ENCODE measurements at regions of chr1 and their contacts with region 1.

Region 1: GRCh38 chr1:167066333-167067122 is 23.6 kb downstream of the GPA33 start:
- DNase-seq: peak; percentile 66 to 82
- ATAC-seq: peak; percentile 85 to 94 (median 88)
- H3K4me3 ChIP-seq: peak overlapping the region in 7 of 10 donors; percentile 2 to 36 (median 24)
- H3K27ac ChIP-seq: no peak overlapping the region
- H3K4me1 ChIP-seq: peaks cover 0 to 12% (median 6%) of the 10 kb centered on the region in 9 donors
- H3K27me3 ChIP-seq: peaks cover 0 to 3% (median 0%) of the 10 kb centered on the region in 7 donors
- CTCF ChIP-seq: peak; percentile 87 to 98 (median 97)

Region 2: DNA sequence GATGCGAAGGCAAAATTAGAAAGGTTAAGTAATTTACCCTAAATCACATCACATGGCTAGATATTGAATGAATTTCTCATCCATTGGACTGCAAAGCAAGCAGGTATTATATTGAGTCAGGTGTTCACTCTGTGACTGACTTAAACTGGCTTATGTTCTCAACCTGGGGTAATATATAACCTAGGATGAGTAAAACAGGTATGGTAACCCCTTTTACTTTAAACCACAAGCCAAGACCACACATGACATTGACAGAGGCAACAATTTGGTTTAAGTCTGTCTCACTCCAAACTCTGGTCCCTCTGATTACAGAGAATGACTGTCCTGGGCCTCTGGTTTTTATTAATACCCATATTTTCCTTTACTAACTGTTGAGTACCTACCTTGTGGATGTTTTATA is 44.1 kb before region 1 on chr1:
- intact Hi-C with region 1: no loop called
- DNase-seq: no peak
- ATAC-seq: no peak
- H3K4me3 ChIP-seq: no peak overlapping the region
- H3K27ac ChIP-seq: no peak overlapping the region
- H3K4me1 ChIP-seq: no peaks in the 10 kb centered on the region
- H3K27me3 ChIP-seq: peaks cover 0 to 10% (median 2%) of the 10 kb centered on the region in 7 donors
- CTCF ChIP-seq: no peak

Region 3: DNA sequence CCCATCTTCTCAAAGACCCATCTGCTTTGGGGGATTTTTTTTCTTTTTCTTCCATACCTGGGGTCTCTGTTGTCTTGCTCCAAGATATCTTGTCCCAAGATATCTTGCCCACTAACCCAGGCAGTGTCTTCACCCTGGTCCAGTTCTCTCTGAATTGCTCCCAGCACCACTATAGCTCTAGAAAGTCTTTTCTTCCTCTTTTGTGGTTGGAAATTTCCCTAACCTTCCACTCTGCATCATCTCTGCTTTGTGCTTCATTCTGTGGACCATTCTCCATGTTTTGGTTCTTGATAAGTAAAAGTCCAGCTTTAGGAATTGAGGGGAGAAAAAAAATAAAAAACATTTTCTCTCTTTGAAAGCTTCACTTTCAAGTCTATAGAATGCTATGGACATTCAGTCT is 48.2 kb after region 1 on chr1:
- intact Hi-C with region 1: loop called in 1 of 10 experiments (anchors 5 kb)
- DNase-seq: no peak
- ATAC-seq: no peak
- H3K4me3 ChIP-seq: no peak overlapping the region
- H3K27ac ChIP-seq: no peak overlapping the region
- H3K4me1 ChIP-seq: peaks cover 0 to 39% (median 0%) of the 10 kb centered on the region in 9 donors
- H3K27me3 ChIP-seq: peaks cover 0 to 14% (median 0%) of the 10 kb centered on the region in 7 donors
- CTCF ChIP-seq: no peak

Region 4: DNA sequence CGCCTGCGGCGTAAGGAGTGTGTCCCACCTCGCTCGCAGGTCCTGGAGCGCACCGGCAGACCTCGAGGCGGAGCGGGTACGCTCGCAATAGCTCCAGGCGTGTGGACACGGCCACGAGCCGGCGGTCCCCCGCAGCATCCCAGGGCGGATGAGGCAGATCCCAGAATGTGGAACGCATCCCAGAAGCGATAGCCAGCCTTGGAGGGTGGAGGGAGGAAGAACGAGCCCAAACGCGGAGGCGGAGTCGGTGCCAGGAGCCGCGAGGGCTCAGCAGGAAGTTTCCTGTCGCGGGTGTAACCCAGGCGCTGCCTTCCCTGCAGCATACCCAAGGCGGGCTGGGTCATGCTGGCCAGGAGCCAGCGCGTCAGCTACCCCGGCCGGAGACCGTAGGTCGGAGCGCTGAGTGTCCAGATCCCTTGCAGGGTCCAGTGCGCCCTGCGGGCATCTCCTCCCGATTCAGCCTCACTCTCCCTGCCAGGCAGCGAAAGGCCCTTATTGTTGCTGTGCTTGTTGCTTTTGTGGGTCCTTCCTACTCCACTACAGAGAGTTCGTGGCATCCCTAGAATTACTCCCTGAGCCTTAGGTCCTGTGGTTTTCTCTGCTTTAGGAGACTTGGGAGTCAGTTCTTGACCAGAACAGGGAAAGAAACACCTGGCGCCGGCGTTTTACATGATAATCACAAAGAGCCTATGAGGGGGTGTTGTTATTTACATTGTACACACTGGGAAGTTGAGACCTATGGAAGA is 55.0 kb after region 1 on chr1:
- intact Hi-C with region 1: loop called in 2 of 10 experiments (anchors 5 kb)
- DNase-seq: no peak
- ATAC-seq: peak; percentile 25 to 61 (median 36)
- H3K4me3 ChIP-seq: peak overlapping the region in 8 of 10 donors; percentile 16 to 51 (median 24)
- H3K27ac ChIP-seq: no peak overlapping the region
- H3K4me1 ChIP-seq: peaks cover 0 to 42% (median 5%) of the 10 kb centered on the region in 9 donors
- H3K27me3 ChIP-seq: peaks cover 0 to 23% (median 0%) of the 10 kb centered on the region in 7 donors
- CTCF ChIP-seq: no peak

Region 5: DNA sequence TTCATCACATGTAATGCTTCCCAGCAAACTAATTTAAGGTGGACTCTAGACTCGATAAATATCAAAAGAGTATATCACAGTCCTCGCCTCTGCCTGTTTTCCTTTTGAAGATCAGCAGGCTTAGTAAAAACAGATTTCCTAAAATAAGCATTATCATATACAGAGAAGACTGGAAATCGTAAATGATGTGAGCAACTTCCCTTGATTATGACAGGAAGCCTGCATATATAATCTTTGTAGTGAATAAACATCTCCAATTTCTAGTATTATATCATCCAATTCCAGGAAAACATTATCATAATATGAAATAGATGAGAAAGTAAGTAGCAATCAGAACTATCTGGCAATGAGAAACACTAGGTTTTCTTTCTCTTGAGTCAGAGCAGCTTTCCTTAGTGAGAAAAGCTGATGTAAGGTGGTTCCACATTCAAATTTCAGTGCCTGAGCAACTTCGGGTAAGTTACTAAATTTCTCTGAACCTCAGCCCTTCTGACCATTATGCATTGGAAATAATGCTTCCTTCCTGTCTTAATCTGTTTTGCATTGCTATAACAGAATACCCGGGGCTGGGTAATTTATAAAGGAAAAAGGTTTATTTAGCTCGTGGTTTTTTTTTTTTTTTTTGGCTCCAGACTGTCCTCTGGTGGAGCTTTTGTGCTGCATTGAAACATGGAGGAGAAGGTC is 141.6 kb after region 1 on chr1:
- intact Hi-C with region 1: loop called in 6 of 10 experiments (anchors 5 to 10 kb)
- DNase-seq: no peak
- ATAC-seq: no peak
- H3K4me3 ChIP-seq: no peak overlapping the region
- H3K27ac ChIP-seq: no peak overlapping the region
- H3K4me1 ChIP-seq: peaks cover 0 to 7% (median 0%) of the 10 kb centered on the region in 9 donors
- H3K27me3 ChIP-seq: no peaks in the 10 kb centered on the region
- CTCF ChIP-seq: peak in 6 of 9 donors; percentile 20 to 46 (median 30)

Region 6: GRCh38 chr1:167220537-167221125 is 154.1 kb after region 1 on chr1 and contains the start of gene POU2F1:
- intact Hi-C with region 1: loop called in 8 of 10 experiments (anchors 2 to 10 kb)
- DNase-seq: peak; percentile 98 to 100
- ATAC-seq: peak; percentile 92 to 99 (median 96)
- H3K4me3 ChIP-seq: peak within 1 kb of the TSS; percentile 67 to 99 (median 87)
- H3K27ac ChIP-seq: peak within 1 kb of the TSS; percentile 85 to 96 (median 94)
- H3K4me1 ChIP-seq: peaks cover 6 to 32% (median 28%) of the 10 kb centered on the region in 9 donors
- H3K27me3 ChIP-seq: no peaks in the 10 kb centered on the region
- CTCF ChIP-seq: peak; percentile 48 to 74 (median 63)
- total RNA-seq, gene POU2F1: 6.2 to 13.9 (median 10.4) TPM